ENCODE measurements at regions of chr2 and their contacts with region 1.

Region 1: GRCh38 chr2:38465789-38466127 is 88.7 kb upstream of the ATL2 start:
- DNase-seq: no peak
- H3K4me3 ChIP-seq: no peak overlapping the region
- H3K27ac ChIP-seq: peak overlapping the region; percentile 85 to 95 (median 90)
- H3K4me1 ChIP-seq: peaks cover 0 to 97% (median 85%) of the 10 kb centered on the region in 4 donors
- H3K27me3 ChIP-seq: no peaks in the 10 kb centered on the region
- CTCF ChIP-seq: peak in 2 of 3 experiments; percentile 27 to 37
- EP300 ChIP-seq: no peak
- POLR2A ChIP-seq: no peak

Region 2: DNA sequence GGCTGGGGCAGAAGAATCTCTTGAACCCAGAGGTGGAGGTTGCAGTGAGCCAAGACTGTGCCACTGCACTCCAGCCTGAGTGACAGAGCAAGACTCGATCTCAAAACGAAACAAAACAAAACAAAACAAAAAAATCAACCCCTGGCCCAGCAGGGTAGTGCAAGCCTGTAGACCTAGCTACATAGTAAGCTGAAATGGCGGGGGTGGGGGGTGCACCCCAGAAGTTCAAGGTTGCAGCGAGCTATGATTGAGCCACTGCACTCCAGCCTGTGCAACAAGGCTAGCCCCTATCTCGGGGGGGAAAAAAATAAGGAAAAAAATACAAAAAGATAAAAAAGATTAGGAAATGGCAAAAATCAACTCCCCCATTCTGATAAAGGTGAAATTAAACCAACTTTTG is 95.1 kb before region 1 on chr2:
- intact Hi-C with region 1: no loop called
- DNase-seq: no peak
- H3K4me3 ChIP-seq: no peak overlapping the region
- H3K27ac ChIP-seq: peak overlapping the region; percentile 52 to 99 (median 56)
- H3K4me1 ChIP-seq: peaks cover 26 to 91% (median 87%) of the 10 kb centered on the region in 4 donors
- H3K27me3 ChIP-seq: no peaks in the 10 kb centered on the region
- CTCF ChIP-seq: no peak
- EP300 ChIP-seq: no peak
- POLR2A ChIP-seq: no peak

Region 3: GRCh38 chr2:38498045-38498481 is 32.3 kb after region 1 on chr2:
- intact Hi-C with region 1: loop called (anchors 2 kb)
- DNase-seq: no peak
- H3K4me3 ChIP-seq: no peak overlapping the region
- H3K27ac ChIP-seq: peak overlapping the region in 3 of 4 donors; percentile 5 to 76 (median 57)
- H3K4me1 ChIP-seq: peaks cover 19 to 56% (median 53%) of the 10 kb centered on the region in 4 donors
- H3K27me3 ChIP-seq: no peaks in the 10 kb centered on the region
- CTCF ChIP-seq: no peak
- EP300 ChIP-seq: no peak
- POLR2A ChIP-seq: no peak

Region 4: DNA sequence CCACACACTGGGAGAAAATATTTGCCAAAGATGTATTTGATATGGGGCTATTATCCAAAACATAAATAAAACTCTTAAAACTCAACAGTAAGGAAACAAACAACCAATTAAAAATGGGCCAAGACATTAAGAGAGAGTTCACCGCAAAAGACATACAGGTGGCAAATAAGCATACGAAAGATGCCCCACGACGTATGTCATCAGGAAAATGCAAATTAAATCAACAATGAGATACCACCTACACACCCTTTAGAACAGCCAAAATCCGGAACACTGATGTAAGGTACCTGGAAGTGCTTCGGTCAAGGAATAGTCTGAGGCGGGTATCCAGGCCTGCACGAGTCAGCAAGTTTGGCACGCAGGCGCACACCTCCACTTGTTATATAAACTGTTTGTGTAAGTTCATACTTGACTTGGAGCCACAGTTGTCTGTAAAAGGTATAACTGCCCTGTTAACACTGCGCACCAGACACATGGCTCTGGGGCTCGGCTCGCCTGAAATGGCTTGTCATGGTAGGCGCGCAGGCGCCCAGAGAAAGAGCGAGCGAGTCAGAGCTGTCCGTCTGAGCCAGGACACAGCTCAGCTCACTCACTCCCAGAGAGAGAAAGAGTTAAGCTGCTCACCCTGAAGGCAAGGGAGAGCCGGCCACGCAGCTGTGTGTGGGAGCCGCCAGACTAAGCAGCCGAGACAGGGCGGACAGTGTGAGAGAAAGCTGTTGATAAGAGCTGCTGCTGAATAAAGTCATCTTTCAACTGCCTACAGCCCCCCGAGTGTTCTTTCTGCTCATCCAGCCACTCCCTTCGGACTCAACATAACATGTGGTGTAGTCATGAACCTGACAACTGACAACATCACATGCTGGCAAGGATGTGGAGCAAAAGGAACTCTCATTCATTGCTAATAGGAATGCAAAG is 49.7 kb after region 1 on chr2:
- intact Hi-C with region 1: loop called (anchors 5 kb)
- DNase-seq: no peak
- H3K4me3 ChIP-seq: peak overlapping the region; percentile 40 to 56 (median 41)
- H3K27ac ChIP-seq: peak overlapping the region; percentile 87 to 90 (median 90)
- H3K4me1 ChIP-seq: peaks cover 0 to 58% (median 45%) of the 10 kb centered on the region in 4 donors
- H3K27me3 ChIP-seq: no peaks in the 10 kb centered on the region
- CTCF ChIP-seq: no peak
- EP300 ChIP-seq: no peak
- POLR2A ChIP-seq: no peak

Measured in esophagus muscularis mucosa (tissue), 4 donors.